ENCODE measurements at regions of chr6 and their contacts with region 1.

Region 1: GRCh38 chr6:32153564-32154513 is at the start of gene PPT2:
- H3K4me3 Mint-ChIP-seq: peak within 1 kb of the TSS; percentile 86
- H3K27ac Mint-ChIP-seq: peak within 1 kb of the TSS; percentile 61
- H3K4me1 Mint-ChIP-seq: peaks cover 39% of the 10 kb centered on the region
- H3K27me3 Mint-ChIP-seq: peaks cover 64% of the 10 kb centered on the region

Region 2: DNA sequence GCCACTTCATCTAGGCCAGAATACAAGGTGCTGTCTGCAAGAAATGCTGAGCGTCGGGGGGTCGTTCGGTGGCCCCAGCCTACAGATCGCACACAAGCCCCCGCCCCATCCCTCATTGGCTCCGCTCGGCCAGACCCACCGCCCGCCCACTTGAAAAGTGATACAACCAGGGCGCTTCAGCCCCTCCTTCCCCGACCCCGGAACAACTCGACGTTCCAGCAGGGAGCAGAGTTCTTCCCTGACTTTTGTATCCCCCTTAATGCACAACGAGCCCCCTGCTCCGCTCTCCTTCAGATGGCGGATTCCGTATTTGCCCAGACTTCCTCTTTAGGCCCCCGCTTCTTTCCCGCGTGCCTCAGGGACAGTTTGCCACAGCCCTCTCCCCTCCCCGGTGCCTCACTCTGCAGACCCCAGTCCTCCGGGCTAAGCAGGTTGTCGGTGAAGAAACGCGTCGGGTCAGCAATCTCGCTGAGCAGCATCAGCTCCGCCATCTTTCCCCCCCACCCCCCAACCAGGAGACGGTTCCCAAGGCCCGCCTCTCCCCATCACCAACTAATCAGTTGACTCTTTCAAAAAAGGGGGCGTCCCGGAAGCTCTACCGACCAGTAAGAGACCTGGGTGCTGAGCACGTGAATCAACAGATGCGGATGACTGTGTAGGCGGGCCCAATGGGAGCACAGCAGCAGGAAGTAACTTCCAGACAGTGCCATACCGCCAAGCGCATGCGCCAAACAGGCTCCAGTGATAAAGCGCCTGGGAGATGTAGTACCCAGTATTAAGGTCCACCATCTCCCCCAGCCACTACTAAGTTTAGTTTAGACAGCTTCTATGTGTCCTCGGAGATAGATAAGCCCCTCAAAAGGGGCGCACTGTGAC is 25.9 kb before region 1 on chr6 and contains the start of gene ATF6B:
- intact Hi-C with region 1: loop called (anchors 1 kb)
- H3K4me3 Mint-ChIP-seq: peak within 1 kb of the TSS; percentile 98
- H3K27ac Mint-ChIP-seq: peak within 1 kb of the TSS; percentile 98
- H3K4me1 Mint-ChIP-seq: peaks cover 55% of the 10 kb centered on the region
- H3K27me3 Mint-ChIP-seq: peaks cover 2% of the 10 kb centered on the region

Measured in dendritic cell treated with granulocyte-macrophage colony-stimulating factor and Interleukin-4, amounts not matched to agents 40 ng/mL and 50 ng/mL, for 4 days (primary cell).